CD4-positive, alpha-beta T cell (primary cell): ENCODE measurements at regions of chr15 and their contacts with region 1.

Region 1: GRCh38 chr15:40382580-40383456 is at the start of gene KNSTRN:
- DNase-seq: peak; percentile 86 to 96 (median 90)
- ATAC-seq: peak; percentile 98
- H3K4me3 ChIP-seq: peak within 1 kb of the TSS; percentile 69
- H3K4me3 Mint-ChIP-seq: peak within 1 kb of the TSS; percentile 94
- H3K27ac ChIP-seq: no peak within 1 kb of the TSS
- H3K27ac Mint-ChIP-seq: no peak within 1 kb of the TSS
- H3K4me1 ChIP-seq: peaks cover 15% of the 10 kb centered on the region
- H3K4me1 Mint-ChIP-seq: peaks cover 15% of the 10 kb centered on the region
- H3K27me3 ChIP-seq: no peaks in the 10 kb centered on the region
- H3K27me3 Mint-ChIP-seq: no peaks in the 10 kb centered on the region
- CTCF ChIP-seq: no peak
- total RNA-seq, gene KNSTRN: 2.8 to 3.0 TPM

Region 2: GRCh38 chr15:38453971-38454695 is 1928.7 kb before region 1 on chr15 and contains the start of gene FAM98B:
- CTCF ChIA-PET with region 1: no interaction called
- POLR2A ChIA-PET with region 1: no interaction called
- intact Hi-C with region 1: loop called in 1 of 2 experiments (anchors 5 kb)
- DNase-seq: peak; percentile 72 to 90 (median 84)
- ATAC-seq: peak; percentile 90
- H3K4me3 ChIP-seq: peak within 1 kb of the TSS; percentile 80
- H3K4me3 Mint-ChIP-seq: peak within 1 kb of the TSS; percentile 94
- H3K27ac ChIP-seq: peak within 1 kb of the TSS; percentile 75 to 77
- H3K27ac Mint-ChIP-seq: peak within 1 kb of the TSS; percentile 95
- H3K4me1 ChIP-seq: peaks cover 14% of the 10 kb centered on the region
- H3K4me1 Mint-ChIP-seq: peaks cover 40% of the 10 kb centered on the region
- H3K27me3 ChIP-seq: no peaks in the 10 kb centered on the region
- H3K27me3 Mint-ChIP-seq: no peaks in the 10 kb centered on the region
- CTCF ChIP-seq: no peak
- total RNA-seq, gene FAM98B: 20.1 to 20.4 TPM

Region 3: DNA sequence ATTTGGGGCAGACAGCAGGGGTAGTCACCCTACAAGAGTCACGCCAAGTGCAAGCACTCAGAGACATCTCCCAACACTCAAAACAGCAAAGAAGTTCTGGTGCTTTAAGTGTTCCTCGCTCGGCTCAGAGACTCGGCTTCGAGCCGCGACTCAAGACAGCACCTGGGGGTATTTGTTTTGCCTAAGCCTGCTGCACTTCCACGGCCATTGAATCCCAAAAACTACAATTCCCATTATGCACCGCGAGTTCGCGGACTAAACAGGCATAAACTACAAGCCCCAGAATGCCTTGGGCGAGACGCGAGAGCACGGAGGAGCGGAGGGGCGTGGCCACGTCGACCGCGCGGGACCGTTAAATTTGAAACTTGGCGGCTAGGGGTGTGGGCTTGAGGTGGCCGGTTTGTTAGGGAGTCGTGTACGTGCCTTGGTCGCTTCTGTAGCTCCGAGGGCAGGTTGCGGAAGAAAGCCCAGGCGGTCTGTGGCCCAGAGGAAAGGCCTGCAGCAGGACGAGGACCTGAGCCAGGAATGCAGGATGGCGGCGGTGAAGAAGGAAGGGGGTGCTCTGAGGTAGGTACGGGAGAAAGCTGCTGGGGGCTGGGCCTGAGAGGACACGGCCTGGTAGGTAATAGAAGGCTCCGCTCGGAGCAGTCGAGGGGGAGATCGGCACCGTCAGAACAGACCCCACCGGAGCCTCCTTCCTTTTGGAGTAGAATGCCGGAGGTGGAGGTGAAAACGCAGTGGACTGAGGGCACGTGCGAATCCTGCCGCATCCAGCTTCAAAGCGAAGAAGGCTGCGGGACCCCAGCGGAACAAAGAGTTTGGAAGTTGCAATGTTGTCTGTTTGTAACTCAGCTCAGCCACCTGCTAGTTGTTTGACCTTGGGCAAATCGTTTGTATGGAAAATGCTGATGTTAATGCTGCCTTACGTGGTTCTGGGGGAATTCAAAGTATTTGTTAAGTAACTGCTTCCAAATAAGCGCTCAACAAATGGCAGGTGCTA is 221.8 kb before region 1 on chr15 and contains the start of gene BUB1B:
- CTCF ChIA-PET with region 1: no interaction called
- POLR2A ChIA-PET with region 1: no interaction called
- intact Hi-C with region 1: loop called in 1 of 2 experiments (anchors 5 kb)
- DNase-seq: peak; percentile 84 to 96 (median 90)
- ATAC-seq: peak; percentile 99
- H3K4me3 ChIP-seq: peak within 1 kb of the TSS; percentile 78
- H3K4me3 Mint-ChIP-seq: no peak within 1 kb of the TSS
- H3K27ac ChIP-seq: no peak within 1 kb of the TSS
- H3K27ac Mint-ChIP-seq: no peak within 1 kb of the TSS
- H3K4me1 ChIP-seq: peaks cover 12% of the 10 kb centered on the region
- H3K4me1 Mint-ChIP-seq: no peaks in the 10 kb centered on the region
- H3K27me3 ChIP-seq: no peaks in the 10 kb centered on the region
- H3K27me3 Mint-ChIP-seq: no peaks in the 10 kb centered on the region
- CTCF ChIP-seq: no peak
- total RNA-seq, gene BUB1B: 1.4 to 2.4 TPM

Region 4: GRCh38 chr15:40357723-40358470 is 24.9 kb before region 1 on chr15 and contains the start of gene DISP2:
- CTCF ChIA-PET with region 1: no interaction called
- POLR2A ChIA-PET with region 1: interaction called, 3 read pairs
- intact Hi-C with region 1: loop called in 1 of 2 experiments (anchors 1 kb)
- DNase-seq: peak; percentile 77 to 96 (median 89)
- ATAC-seq: peak; percentile 91
- H3K4me3 ChIP-seq: peak within 1 kb of the TSS; percentile 67
- H3K4me3 Mint-ChIP-seq: peak within 1 kb of the TSS; percentile 80
- H3K27ac ChIP-seq: no peak within 1 kb of the TSS
- H3K27ac Mint-ChIP-seq: no peak within 1 kb of the TSS
- H3K4me1 ChIP-seq: peaks cover 17% of the 10 kb centered on the region
- H3K4me1 Mint-ChIP-seq: peaks cover 14% of the 10 kb centered on the region
- H3K27me3 ChIP-seq: no peaks in the 10 kb centered on the region
- H3K27me3 Mint-ChIP-seq: no peaks in the 10 kb centered on the region
- CTCF ChIP-seq: no peak
- total RNA-seq, gene DISP2: 0.03 to 0.06 TPM

Region 5: GRCh38 chr15:40367686-40368611 is 14.9 kb before region 1 on chr15:
- CTCF ChIA-PET with region 1: interaction called, 12 read pairs
- POLR2A ChIA-PET with region 1: interaction called, 7 read pairs
- intact Hi-C with region 1: no loop called
- DNase-seq: peak; percentile 74 to 97 (median 83)
- ATAC-seq: peak; percentile 98
- H3K4me3 ChIP-seq: peak overlapping the region; percentile 69
- H3K4me3 Mint-ChIP-seq: peak overlapping the region; percentile 81
- H3K27ac ChIP-seq: peak overlapping the region in 1 of 2 donors; percentile 1
- H3K27ac Mint-ChIP-seq: peak overlapping the region; percentile 64
- H3K4me1 ChIP-seq: peaks cover 33% of the 10 kb centered on the region
- H3K4me1 Mint-ChIP-seq: peaks cover 17% of the 10 kb centered on the region
- H3K27me3 ChIP-seq: no peaks in the 10 kb centered on the region
- H3K27me3 Mint-ChIP-seq: no peaks in the 10 kb centered on the region
- CTCF ChIP-seq: peak; percentile 88

Region 6: GRCh38 chr15:40405501-40406381 is 22.9 kb after region 1 on chr15 and contains the start of gene IVD:
- CTCF ChIA-PET with region 1: no interaction called
- POLR2A ChIA-PET with region 1: interaction called, 10 read pairs
- intact Hi-C with region 1: loop called in 1 of 2 experiments (anchors 2 kb)
- DNase-seq: peak; percentile 67 to 92 (median 82)
- ATAC-seq: peak; percentile 96
- H3K4me3 ChIP-seq: peak within 1 kb of the TSS; percentile 76
- H3K4me3 Mint-ChIP-seq: peak within 1 kb of the TSS; percentile 92
- H3K27ac ChIP-seq: peak within 1 kb of the TSS; percentile 35 to 60
- H3K27ac Mint-ChIP-seq: peak within 1 kb of the TSS; percentile 69
- H3K4me1 ChIP-seq: peaks cover 22% of the 10 kb centered on the region
- H3K4me1 Mint-ChIP-seq: peaks cover 39% of the 10 kb centered on the region
- H3K27me3 ChIP-seq: no peaks in the 10 kb centered on the region
- H3K27me3 Mint-ChIP-seq: no peaks in the 10 kb centered on the region
- CTCF ChIP-seq: no peak
- total RNA-seq, gene IVD: 30.7 to 31.9 TPM